RWPE1 (cell line): ENCODE measurements at regions of chr12 and their contacts with region 1.

Region 1: GRCh38 chr12:54993161-54993835 is 8.7 kb upstream of the TESPA1 start:
- DNase-seq: peak; percentile 60
- H3K27ac ChIP-seq: no peak overlapping the region
- CTCF ChIP-seq: peak; percentile 84

Region 2: GRCh38 chr12:55065535-55065934 is 72.2 kb after region 1 on chr12:
- CTCF ChIA-PET with region 1: interaction called, 21 read pairs
- POLR2A ChIA-PET with region 1: no interaction called
- DNase-seq: no peak
- H3K27ac ChIP-seq: no peak overlapping the region
- CTCF ChIP-seq: no peak

Region 3: GRCh38 chr12:55073043-55074022 is 80.0 kb after region 1 on chr12:
- CTCF ChIA-PET with region 1: interaction called, 39 read pairs
- POLR2A ChIA-PET with region 1: no interaction called
- DNase-seq: peak; percentile 63
- H3K27ac ChIP-seq: no peak overlapping the region
- CTCF ChIP-seq: peak; percentile 87